WTC11 (cell line): ENCODE measurements at regions of chr21 and their contacts with region 1.

Region 1: DNA sequence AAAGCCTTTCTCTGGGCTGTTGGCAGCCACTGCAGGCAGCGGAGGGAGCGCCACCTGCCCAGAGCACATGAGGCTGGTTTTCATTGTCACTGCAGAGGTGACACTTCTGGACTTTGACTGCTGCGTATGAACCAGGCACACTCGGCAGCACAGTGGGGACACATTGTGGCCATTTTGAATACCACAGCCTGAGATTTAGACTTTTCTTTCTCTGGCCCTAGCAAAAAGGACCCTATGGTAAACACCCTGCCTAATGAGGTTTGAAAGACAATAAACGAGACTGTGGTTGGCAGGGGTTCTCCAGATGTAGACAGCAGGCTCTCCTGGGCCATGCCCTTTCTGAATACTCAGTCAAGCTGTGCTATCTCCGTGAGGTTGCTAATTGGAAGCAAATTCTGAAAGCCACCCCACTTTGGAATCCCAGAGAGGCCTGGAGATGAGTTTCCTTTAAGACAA is 12.0 kb upstream of the KCNE2 start:
- DNase-seq: no peak
- ATAC-seq: peak; percentile 87
- H3K4me3 Mint-ChIP-seq: no peak overlapping the region
- H3K27ac Mint-ChIP-seq: no peak overlapping the region
- H3K4me1 Mint-ChIP-seq: peaks cover 7% of the 10 kb centered on the region; the same call in 1 of the 2 replicates
- H3K27me3 Mint-ChIP-seq: peaks cover 6% of the 10 kb centered on the region
- CTCF ChIP-seq: peak; percentile 27; the same call in 1 of the 2 replicates

Region 2: GRCh38 chr21:33894736-33895288 is 457.0 kb before region 1 on chr21:
- CTCF ChIA-PET with region 1: interaction called, 18 read pairs
- POLR2A ChIA-PET with region 1: no interaction called
- DNase-seq: peak; percentile 84
- ATAC-seq: peak; percentile 88
- H3K4me3 Mint-ChIP-seq: peak overlapping the region; percentile 51
- H3K27ac Mint-ChIP-seq: peak overlapping the region; percentile 34; the same call in 1 of the 2 replicates
- H3K4me1 Mint-ChIP-seq: peaks cover 21% of the 10 kb centered on the region
- H3K27me3 Mint-ChIP-seq: 0 out of 2 replicates have a peak, but pooled peaks cover 6% of the 10 kb centered on the region
- CTCF ChIP-seq: no peak; the same call in 1 of the 2 replicates

Region 3: GRCh38 chr21:34073032-34073869 is 278.6 kb before region 1 on chr21 and contains the starts of genes MRPS6 and SLC5A3:
- CTCF ChIA-PET with region 1: interaction called, 25 read pairs
- POLR2A ChIA-PET with region 1: no interaction called
- DNase-seq: peak; percentile 88
- ATAC-seq: peak; percentile 95
- H3K4me3 Mint-ChIP-seq: peak within 1 kb of the TSS; percentile 96
- H3K27ac Mint-ChIP-seq: peak within 1 kb of the TSS; percentile 92
- H3K4me1 Mint-ChIP-seq: peaks cover 39% of the 10 kb centered on the region
- H3K27me3 Mint-ChIP-seq: peaks cover 11% of the 10 kb centered on the region
- CTCF ChIP-seq: no peak; the same call in 1 of the 2 replicates
- total RNA-seq, gene MRPS6: 109 to 133 TPM (median 111 TPM) in 3 replicates
- total RNA-seq, gene SLC5A3: 14.8 to 18.0 TPM (median 17.8 TPM) in 3 replicates

Region 4: DNA sequence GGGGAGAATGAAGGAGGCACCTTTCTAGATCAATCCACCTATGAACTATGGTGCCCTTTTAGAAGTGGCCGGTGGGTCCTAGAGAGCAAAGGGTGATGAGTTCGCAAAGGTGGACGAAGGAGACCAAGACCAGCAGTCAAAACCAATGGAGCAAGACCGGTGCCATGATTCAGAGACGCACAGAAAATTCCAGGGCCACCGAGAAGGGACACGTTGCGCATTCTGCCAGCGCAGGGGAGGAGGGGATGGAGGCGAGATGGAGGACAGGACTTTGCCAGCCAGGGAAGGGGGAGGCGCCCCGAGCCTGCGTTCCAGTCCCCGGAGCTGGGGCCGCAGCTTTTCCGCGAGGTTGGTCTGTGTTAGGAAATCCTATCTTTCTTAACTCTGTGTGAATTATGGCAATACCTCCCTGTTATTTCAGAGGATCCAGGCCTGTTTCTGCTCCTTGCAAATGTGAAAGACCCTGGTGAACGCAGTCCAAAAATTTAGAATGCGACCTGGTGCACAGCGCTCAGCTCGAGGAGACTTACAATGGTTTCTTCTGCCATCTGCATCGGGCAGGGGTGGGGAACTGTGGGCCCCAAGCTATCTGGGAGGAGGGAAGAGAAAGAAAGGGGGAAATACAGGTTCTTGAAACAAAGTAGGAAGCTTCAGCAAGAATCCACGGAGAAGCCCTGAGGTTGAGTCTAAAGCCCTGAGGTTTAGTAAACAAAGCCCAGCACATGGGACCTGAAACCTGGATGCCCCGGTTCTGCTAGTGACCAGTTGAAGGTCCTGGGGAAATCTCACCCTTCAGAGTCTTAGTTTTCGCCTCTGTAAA is 149.1 kb before region 1 on chr21:
- CTCF ChIA-PET with region 1: interaction called, 27 read pairs
- POLR2A ChIA-PET with region 1: no interaction called
- DNase-seq: peak; percentile 63
- ATAC-seq: peak; percentile 58
- H3K4me3 Mint-ChIP-seq: peak overlapping the region; percentile 76
- H3K27ac Mint-ChIP-seq: peak overlapping the region; percentile 96
- H3K4me1 Mint-ChIP-seq: peaks cover 73% of the 10 kb centered on the region
- H3K27me3 Mint-ChIP-seq: no peaks in the 10 kb centered on the region; the same call in 1 of the 2 replicates
- CTCF ChIP-seq: no peak

Region 5: GRCh38 chr21:34336756-34337391 is 14.9 kb before region 1 on chr21:
- CTCF ChIA-PET with region 1: interaction called, 19 read pairs
- POLR2A ChIA-PET with region 1: no interaction called
- DNase-seq: no peak
- ATAC-seq: no peak
- H3K4me3 Mint-ChIP-seq: no peak overlapping the region
- H3K27ac Mint-ChIP-seq: no peak overlapping the region
- H3K4me1 Mint-ChIP-seq: 0 out of 2 replicates have a peak, but pooled peaks cover 6% of the 10 kb centered on the region
- H3K27me3 Mint-ChIP-seq: no peaks in the 10 kb centered on the region
- CTCF ChIP-seq: no peak